ENCODE measurements at regions of chr9 and their contacts with region 1.

Region 1: DNA sequence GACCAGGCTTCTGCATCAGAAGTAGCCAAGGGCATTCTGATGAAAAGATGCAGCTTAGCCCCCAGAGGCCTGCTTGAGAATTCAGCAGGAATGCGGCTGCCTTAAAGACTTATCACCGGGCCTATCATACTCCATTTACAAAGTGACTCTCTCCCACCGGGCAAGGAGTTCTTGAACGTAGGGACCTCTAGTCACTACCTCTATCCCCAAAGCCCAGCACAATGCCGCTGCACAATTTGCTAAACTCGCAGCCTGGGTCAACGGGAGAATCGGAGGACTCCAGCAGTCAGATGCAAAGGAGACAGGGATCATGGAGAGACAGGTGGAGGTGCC is 661 bp downstream of the PDCL start:
- DNase-seq: no peak
- ATAC-seq: peak; percentile 5
- H3K4me3 ChIP-seq: peak overlapping the region; percentile 99
- H3K4me3 Mint-ChIP-seq: peak overlapping the region; percentile 100
- H3K27ac ChIP-seq: peak overlapping the region; percentile 84 to 98
- H3K27ac Mint-ChIP-seq: peak overlapping the region; percentile 95
- H3K4me1 ChIP-seq: peaks cover 30% of the 10 kb centered on the region
- H3K4me1 Mint-ChIP-seq: peaks cover 53% of the 10 kb centered on the region
- H3K27me3 ChIP-seq: no peaks in the 10 kb centered on the region
- H3K27me3 Mint-ChIP-seq: no peaks in the 10 kb centered on the region
- CTCF ChIP-seq: no peak

Region 2: GRCh38 chr9:122099271-122099869 is 728.4 kb before region 1 on chr9:
- CTCF ChIA-PET with region 1: no interaction called
- POLR2A ChIA-PET with region 1: no interaction called
- intact Hi-C with region 1: loop called in 1 of 2 experiments (anchors 5 kb)
- DNase-seq: peak; percentile 69 to 89 (median 76)
- ATAC-seq: peak; percentile 82
- H3K4me3 ChIP-seq: no peak overlapping the region
- H3K4me3 Mint-ChIP-seq: peak overlapping the region; percentile 68
- H3K27ac ChIP-seq: no peak overlapping the region
- H3K27ac Mint-ChIP-seq: no peak overlapping the region
- H3K4me1 ChIP-seq: peaks cover 12% of the 10 kb centered on the region
- H3K4me1 Mint-ChIP-seq: peaks cover 16% of the 10 kb centered on the region
- H3K27me3 ChIP-seq: no peaks in the 10 kb centered on the region
- H3K27me3 Mint-ChIP-seq: peaks cover 4% of the 10 kb centered on the region
- CTCF ChIP-seq: peak; percentile 85

Region 3: DNA sequence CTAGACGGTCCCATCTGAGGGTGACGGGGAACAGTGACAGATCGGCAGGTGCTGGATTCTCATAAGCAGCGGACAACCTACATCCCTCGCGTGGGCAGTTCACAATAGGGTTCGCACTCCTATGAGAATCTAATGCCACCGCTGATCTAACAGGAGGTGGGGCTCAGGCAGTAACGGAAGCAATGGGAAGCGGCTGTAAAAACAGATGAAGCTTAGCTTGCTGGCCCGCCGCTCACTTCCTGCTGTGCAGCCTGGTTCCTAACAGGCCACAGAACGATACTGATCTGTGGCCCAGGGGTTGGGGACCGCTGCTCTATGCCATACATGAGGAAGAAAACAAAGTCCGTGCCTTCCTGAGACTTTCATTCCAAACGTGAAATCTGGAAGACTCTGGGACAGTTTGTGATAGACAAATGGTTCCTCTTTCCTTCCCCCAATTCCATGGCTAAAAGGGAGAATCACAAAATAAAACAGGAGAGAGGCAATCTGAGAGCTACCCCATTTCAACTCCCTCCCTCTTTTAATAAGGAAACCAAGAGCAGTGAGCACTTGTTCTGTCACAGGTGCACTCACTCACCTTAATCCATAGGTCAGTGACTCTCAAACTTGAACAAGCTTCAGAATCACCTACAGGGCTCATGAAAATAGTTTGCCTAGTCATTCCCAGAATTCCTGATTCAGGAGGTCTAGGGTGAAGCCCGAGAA is 11.4 kb before region 1 on chr9:
- CTCF ChIA-PET with region 1: interaction called, 5 read pairs
- POLR2A ChIA-PET with region 1: interaction called, 28 read pairs
- intact Hi-C with region 1: no loop called
- DNase-seq: peak; percentile 26 to 70 (median 48)
- ATAC-seq: peak; percentile 91
- H3K4me3 ChIP-seq: peak overlapping the region; percentile 30
- H3K4me3 Mint-ChIP-seq: peak overlapping the region; percentile 80
- H3K27ac ChIP-seq: peak overlapping the region; percentile 71 to 82
- H3K27ac Mint-ChIP-seq: peak overlapping the region; percentile 97
- H3K4me1 ChIP-seq: peaks cover 28% of the 10 kb centered on the region
- H3K4me1 Mint-ChIP-seq: peaks cover 53% of the 10 kb centered on the region
- H3K27me3 ChIP-seq: no peaks in the 10 kb centered on the region
- H3K27me3 Mint-ChIP-seq: no peaks in the 10 kb centered on the region
- CTCF ChIP-seq: no peak

Region 4: GRCh38 chr9:122904823-122905710 is 77.3 kb after region 1 on chr9 and contains the start of gene RC3H2:
- CTCF ChIA-PET with region 1: no interaction called
- POLR2A ChIA-PET with region 1: interaction called, 19 read pairs
- intact Hi-C with region 1: loop called (anchors 1 to 5 kb)
- DNase-seq: peak; percentile 91 to 100 (median 94)
- ATAC-seq: peak; percentile 92
- H3K4me3 ChIP-seq: peak within 1 kb of the TSS; percentile 89
- H3K4me3 Mint-ChIP-seq: peak within 1 kb of the TSS; percentile 100
- H3K27ac ChIP-seq: peak within 1 kb of the TSS; percentile 87
- H3K27ac Mint-ChIP-seq: peak within 1 kb of the TSS; percentile 99
- H3K4me1 ChIP-seq: peaks cover 11% of the 10 kb centered on the region
- H3K4me1 Mint-ChIP-seq: peaks cover 36% of the 10 kb centered on the region
- H3K27me3 ChIP-seq: no peaks in the 10 kb centered on the region
- H3K27me3 Mint-ChIP-seq: no peaks in the 10 kb centered on the region
- CTCF ChIP-seq: no peak
- total RNA-seq, gene RC3H2: 85.2 to 86.8 TPM

Region 5: DNA sequence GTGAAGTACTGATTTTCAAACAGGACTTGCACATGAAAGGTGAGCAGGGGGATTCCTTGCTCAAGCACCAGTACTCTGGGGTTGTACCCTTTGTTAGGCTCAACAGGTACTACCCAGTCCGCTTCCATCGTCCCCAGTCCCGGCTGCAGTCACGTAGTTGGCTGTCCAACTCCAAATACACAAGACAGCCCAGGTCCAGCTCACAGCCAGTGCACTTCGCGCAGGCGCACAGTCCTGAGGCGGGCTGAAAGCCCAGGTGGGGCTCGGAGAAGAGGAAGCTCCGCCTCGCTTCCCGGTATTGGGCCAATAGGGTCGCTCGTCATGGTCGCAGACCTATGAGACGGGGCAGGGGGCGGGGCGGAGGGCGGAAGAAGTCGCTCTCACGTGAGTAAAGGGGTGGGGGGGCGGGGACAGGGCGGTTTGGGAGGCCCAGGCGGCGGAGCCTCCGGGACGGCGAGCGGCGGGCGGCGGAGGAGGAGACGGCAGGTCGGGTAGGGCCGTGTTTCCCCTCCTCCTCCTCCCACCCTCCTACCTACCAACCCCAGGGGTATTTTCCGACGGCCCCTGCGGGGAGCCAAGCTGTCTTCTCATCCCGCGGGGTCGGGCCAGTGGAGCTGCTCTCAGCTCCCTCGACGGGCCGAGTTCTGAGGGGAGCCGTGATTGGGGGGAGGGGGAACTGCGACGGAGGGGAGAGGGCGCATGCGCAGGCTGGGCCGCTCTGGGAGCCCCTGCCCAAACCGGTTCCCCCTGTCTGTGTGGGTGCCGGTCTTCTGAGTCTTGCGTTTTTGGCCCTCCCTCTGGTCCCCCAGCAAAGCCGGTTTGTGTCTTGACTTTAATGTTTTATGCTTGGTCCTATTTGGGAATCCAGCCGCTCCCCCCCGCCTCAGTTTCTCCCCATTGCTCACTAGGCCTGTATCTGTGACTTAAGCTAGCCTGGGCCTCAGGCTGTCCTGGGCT is 113.2 kb after region 1 on chr9 and contains the start of gene RABGAP1:
- CTCF ChIA-PET with region 1: no interaction called
- POLR2A ChIA-PET with region 1: interaction called, 7 read pairs
- intact Hi-C with region 1: loop called in 1 of 2 experiments (anchors 5 kb)
- DNase-seq: peak; percentile 95 to 99 (median 98)
- ATAC-seq: peak; percentile 98
- H3K4me3 ChIP-seq: peak within 1 kb of the TSS; percentile 89
- H3K4me3 Mint-ChIP-seq: peak within 1 kb of the TSS; percentile 91
- H3K27ac ChIP-seq: peak within 1 kb of the TSS; percentile 57 to 80
- H3K27ac Mint-ChIP-seq: peak within 1 kb of the TSS; percentile 88
- H3K4me1 ChIP-seq: peaks cover 19% of the 10 kb centered on the region
- H3K4me1 Mint-ChIP-seq: peaks cover 42% of the 10 kb centered on the region
- H3K27me3 ChIP-seq: no peaks in the 10 kb centered on the region
- H3K27me3 Mint-ChIP-seq: no peaks in the 10 kb centered on the region
- CTCF ChIP-seq: no peak
- total RNA-seq, gene RABGAP1: 20.6 to 24.9 TPM

Region 6: DNA sequence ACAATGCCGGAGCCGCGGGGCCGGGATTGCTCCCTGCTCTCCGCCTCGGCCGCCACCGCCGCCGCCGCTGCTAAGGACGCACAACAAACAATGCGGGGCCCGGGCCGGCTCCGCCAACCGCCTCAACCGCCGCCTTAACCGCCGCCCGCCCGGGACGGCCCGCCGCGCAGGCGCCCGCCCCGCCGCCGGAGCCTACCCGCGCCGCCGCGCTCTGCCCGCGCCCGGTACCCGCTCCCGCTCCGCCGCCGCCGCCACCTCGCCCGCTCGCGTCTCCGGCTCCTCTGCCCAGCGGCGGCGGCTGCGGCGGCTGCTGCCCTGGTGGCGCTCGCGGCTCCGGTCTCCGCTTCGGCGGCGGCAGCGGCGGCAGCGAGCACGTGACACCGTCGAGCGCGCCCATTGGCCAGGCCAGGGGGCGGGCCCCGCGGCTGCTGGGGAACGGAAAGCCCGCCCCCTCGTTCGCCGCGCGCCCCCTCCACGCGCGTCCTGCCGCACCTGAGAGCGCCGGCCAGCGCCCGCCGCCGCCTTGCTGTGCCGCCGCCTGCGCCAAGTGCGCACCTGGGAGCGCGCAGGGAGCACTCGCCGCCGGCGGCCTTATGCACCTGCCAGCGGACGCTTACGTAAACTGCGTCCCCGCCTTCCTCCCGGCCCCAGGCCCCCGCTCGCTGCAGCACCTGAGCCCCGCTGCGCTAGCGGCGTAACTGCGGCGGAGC is 440.7 kb after region 1 on chr9 and contains the start of gene STRBP:
- CTCF ChIA-PET with region 1: no interaction called
- POLR2A ChIA-PET with region 1: no interaction called
- intact Hi-C with region 1: loop called in 1 of 2 experiments (anchors 5 kb)
- DNase-seq: peak; percentile 85 to 98 (median 94)
- ATAC-seq: peak; percentile 88
- H3K4me3 ChIP-seq: peak within 1 kb of the TSS; percentile 76
- H3K4me3 Mint-ChIP-seq: peak within 1 kb of the TSS; percentile 89
- H3K27ac ChIP-seq: peak within 1 kb of the TSS; percentile 62 to 84
- H3K27ac Mint-ChIP-seq: peak within 1 kb of the TSS; percentile 73
- H3K4me1 ChIP-seq: peaks cover 30% of the 10 kb centered on the region
- H3K4me1 Mint-ChIP-seq: peaks cover 35% of the 10 kb centered on the region
- H3K27me3 ChIP-seq: no peaks in the 10 kb centered on the region
- H3K27me3 Mint-ChIP-seq: no peaks in the 10 kb centered on the region
- CTCF ChIP-seq: no peak
- total RNA-seq, gene STRBP: 10.9 to 12.0 TPM

Region 7: DNA sequence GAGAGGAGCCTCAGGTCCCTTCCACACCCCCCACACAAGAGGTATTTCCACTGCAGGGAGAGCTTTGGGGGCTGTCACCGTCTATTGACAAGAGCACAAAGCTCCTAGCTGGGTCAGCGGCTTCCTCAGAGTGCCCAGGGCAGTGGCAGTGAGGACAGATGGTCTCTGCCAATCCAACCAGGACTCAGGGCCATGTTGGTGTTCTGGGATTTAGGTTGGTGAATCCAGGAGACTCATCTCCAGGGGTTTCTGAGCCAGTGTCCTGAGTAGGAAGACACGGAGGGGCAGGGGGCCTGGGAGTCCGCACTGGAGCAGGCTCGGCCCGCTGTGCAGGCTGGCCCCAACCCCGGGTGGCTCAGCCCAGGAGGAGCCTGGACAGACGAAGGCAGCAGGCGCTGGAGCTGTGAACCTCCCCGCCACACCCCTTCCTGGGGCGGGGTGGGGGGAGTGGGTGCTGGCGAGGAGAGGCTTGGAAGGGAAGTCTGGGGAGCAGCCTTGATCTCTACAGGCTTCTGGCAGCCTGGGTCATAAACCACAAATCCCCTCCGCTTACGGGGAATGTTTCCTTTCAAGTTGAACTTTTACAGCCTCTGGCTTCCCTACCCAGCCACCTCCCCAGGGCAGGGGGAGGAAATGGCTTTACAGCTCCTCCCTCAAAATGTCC is 547.9 kb after region 1 on chr9:
- CTCF ChIA-PET with region 1: no interaction called
- POLR2A ChIA-PET with region 1: no interaction called
- intact Hi-C with region 1: no loop called
- DNase-seq: no peak
- ATAC-seq: no peak
- H3K4me3 ChIP-seq: no peak overlapping the region
- H3K4me3 Mint-ChIP-seq: no peak overlapping the region
- H3K27ac ChIP-seq: no peak overlapping the region
- H3K27ac Mint-ChIP-seq: no peak overlapping the region
- H3K4me1 ChIP-seq: peaks cover 9% of the 10 kb centered on the region
- H3K4me1 Mint-ChIP-seq: no peaks in the 10 kb centered on the region
- H3K27me3 ChIP-seq: peaks cover 28 to 35% of the 10 kb centered on the region in 2 experiments
- H3K27me3 Mint-ChIP-seq: peaks cover 31% of the 10 kb centered on the region
- CTCF ChIP-seq: no peak

Measured in CD4-positive, alpha-beta T cell (primary cell).